ENCODE measurements at regions of chr1 and their contacts with region 1.

Region 1: GRCh38 chr1:89649783-89650182 is 16.9 kb downstream of the LRRC8C start:
- DNase-seq: no peak
- ATAC-seq: peak; percentile 69
- H3K4me3 ChIP-seq: no peak overlapping the region
- H3K27ac ChIP-seq: no peak overlapping the region
- H3K4me1 ChIP-seq: peaks cover 12% of the 10 kb centered on the region
- H3K27me3 ChIP-seq: no peaks in the 10 kb centered on the region
- CTCF ChIP-seq: no peak
- EP300 ChIP-seq: no peak
- POLR2A ChIP-seq: no peak
- RAD21 ChIP-seq: no peak

Region 2: GRCh38 chr1:89512996-89513720 is 136.6 kb before region 1 on chr1:
- CTCF ChIA-PET with region 1: no interaction called
- POLR2A ChIA-PET with region 1: no interaction called
- RAD21 ChIA-PET with region 1: no interaction called
- SMC1A ChIA-PET with region 1: no interaction called
- in situ Hi-C with region 1: no loop called
- intact Hi-C with region 1: no loop called
- DNase-seq: no peak
- ATAC-seq: no peak
- H3K4me3 ChIP-seq: no peak overlapping the region
- H3K27ac ChIP-seq: no peak overlapping the region
- H3K4me1 ChIP-seq: no peaks in the 10 kb centered on the region
- H3K27me3 ChIP-seq: no peaks in the 10 kb centered on the region
- CTCF ChIP-seq: no peak
- EP300 ChIP-seq: no peak
- POLR2A ChIP-seq: no peak
- RAD21 ChIP-seq: no peak

Region 3: GRCh38 chr1:89692601-89693521 is 43.1 kb after region 1 on chr1:
- CTCF ChIA-PET with region 1: interaction called, 5 read pairs
- POLR2A ChIA-PET with region 1: no interaction called
- RAD21 ChIA-PET with region 1: interaction called, 5 read pairs
- SMC1A ChIA-PET with region 1: interaction called, 15 read pairs
- in situ Hi-C with region 1: no loop called
- intact Hi-C with region 1: no loop called
- DNase-seq: peak; percentile 52
- ATAC-seq: peak; percentile 83
- H3K4me3 ChIP-seq: peak overlapping the region; percentile 55; the same call in 1 of the 2 replicates
- H3K27ac ChIP-seq: peak overlapping the region; percentile 86
- H3K4me1 ChIP-seq: peaks cover 24% of the 10 kb centered on the region
- H3K27me3 ChIP-seq: no peaks in the 10 kb centered on the region
- CTCF ChIP-seq: no peak
- EP300 ChIP-seq: peak; percentile 89 to 91
- POLR2A ChIP-seq: no peak
- RAD21 ChIP-seq: no peak

Region 4: DNA sequence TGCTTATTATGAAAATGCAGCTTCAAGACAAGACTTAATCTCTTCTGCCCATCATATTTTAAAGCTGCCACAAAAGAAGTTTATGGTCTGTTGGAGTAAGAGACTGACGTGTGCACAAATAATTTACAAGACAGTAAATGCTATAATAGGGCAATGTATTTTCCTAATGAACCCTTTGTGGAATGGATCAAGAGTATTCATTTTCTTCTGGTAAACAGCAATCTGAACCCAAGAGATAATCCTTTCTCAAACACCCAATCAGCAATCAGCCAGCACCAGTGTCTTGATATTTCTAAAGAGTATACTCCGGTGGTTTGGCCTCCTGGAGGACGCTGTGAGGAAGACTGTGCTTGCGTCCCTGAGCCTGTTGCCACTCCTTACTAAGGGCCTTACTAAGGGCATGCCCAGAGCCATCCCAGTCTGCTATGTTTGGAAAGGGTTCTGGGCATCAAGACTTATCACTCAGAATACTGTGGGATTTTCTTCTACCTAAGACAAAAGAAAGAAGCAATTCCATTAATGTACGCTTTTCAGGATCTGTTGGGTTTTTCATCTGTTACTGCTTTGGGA is 122.3 kb after region 1 on chr1:
- CTCF ChIA-PET with region 1: no interaction called
- POLR2A ChIA-PET with region 1: no interaction called
- RAD21 ChIA-PET with region 1: no interaction called
- SMC1A ChIA-PET with region 1: no interaction called
- in situ Hi-C with region 1: no loop called
- intact Hi-C with region 1: no loop called
- DNase-seq: no peak
- ATAC-seq: no peak
- H3K4me3 ChIP-seq: no peak overlapping the region
- H3K27ac ChIP-seq: no peak overlapping the region
- H3K4me1 ChIP-seq: no peaks in the 10 kb centered on the region
- H3K27me3 ChIP-seq: no peaks in the 10 kb centered on the region; a peak in 1 of 4 replicates
- CTCF ChIP-seq: no peak
- EP300 ChIP-seq: no peak
- POLR2A ChIP-seq: no peak
- RAD21 ChIP-seq: no peak

Region 5: GRCh38 chr1:90100566-90100965 is 450.8 kb after region 1 on chr1:
- CTCF ChIA-PET with region 1: no interaction called
- POLR2A ChIA-PET with region 1: no interaction called
- RAD21 ChIA-PET with region 1: no interaction called
- SMC1A ChIA-PET with region 1: no interaction called
- in situ Hi-C with region 1: no loop called
- intact Hi-C with region 1: no loop called
- DNase-seq: no peak
- ATAC-seq: no peak
- H3K4me3 ChIP-seq: no peak overlapping the region
- H3K27ac ChIP-seq: no peak overlapping the region
- H3K4me1 ChIP-seq: no peaks in the 10 kb centered on the region
- H3K27me3 ChIP-seq: no peaks in the 10 kb centered on the region; a peak in 1 of 4 replicates
- CTCF ChIP-seq: no peak
- EP300 ChIP-seq: no peak
- POLR2A ChIP-seq: no peak
- RAD21 ChIP-seq: no peak

Measured in GM12878 (cell line).